ENCODE measurements at regions of chr10 and their contacts with region 1.

Region 1: GRCh38 chr10:91198781-91199180 is 21.7 kb upstream of the PCGF5 start:
- DNase-seq: peak; percentile 36
- ATAC-seq: peak; percentile 93 to 98
- H3K4me3 ChIP-seq: peak overlapping the region in 2 of 4 donors; percentile 16 to 19
- H3K27ac ChIP-seq: peak overlapping the region; percentile 72 to 90 (median 81)
- H3K4me1 ChIP-seq: peaks cover 63 to 72% of the 10 kb centered on the region in 2 donors
- H3K27me3 ChIP-seq: no peaks in the 10 kb centered on the region
- CTCF ChIP-seq: no peak
- POLR2A ChIP-seq: no peak

Region 2: DNA sequence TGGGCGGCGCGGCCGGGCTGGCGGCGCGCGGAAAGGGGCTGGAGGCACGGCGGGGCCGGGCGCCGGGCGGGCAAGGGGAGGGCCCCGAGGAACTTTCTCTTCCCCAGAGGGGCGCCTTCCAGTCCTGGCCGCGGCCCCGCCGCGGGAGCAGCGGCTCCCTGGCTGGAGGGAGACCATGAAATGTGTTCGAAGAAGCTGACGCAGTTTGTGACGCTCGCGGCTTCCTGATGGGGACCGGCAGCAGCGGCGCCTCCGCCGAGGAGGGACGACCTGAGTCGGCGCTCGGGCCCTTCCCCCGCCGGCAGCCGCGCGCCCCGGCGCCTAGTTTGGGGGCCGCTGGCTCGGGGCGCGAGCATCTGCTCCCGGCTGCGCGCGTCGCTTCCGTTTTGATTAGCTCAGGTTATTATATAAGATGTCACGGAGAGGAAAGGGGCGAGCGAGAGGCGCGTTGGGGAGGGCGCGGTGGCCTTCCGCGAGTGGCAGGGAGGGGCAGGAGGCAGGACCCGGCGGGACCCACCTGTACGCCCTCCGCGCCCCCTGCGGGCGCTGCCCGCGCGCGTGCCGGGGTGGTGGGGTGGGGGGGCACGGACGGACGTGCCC is 35.4 kb before region 1 on chr10:
- in situ Hi-C with region 1: no loop called
- intact Hi-C with region 1: no loop called
- DNase-seq: peak; percentile 14 to 46
- ATAC-seq: peak; percentile 39 to 48
- H3K4me3 ChIP-seq: peak overlapping the region; percentile 60 to 87 (median 78)
- H3K27ac ChIP-seq: peak overlapping the region; percentile 85 to 98 (median 96)
- H3K4me1 ChIP-seq: peaks cover 3 to 13% of the 10 kb centered on the region in 2 donors
- H3K27me3 ChIP-seq: no peaks in the 10 kb centered on the region
- CTCF ChIP-seq: peak in 3 of 5 experiments; percentile 6 to 18 (median 14)
- POLR2A ChIP-seq: peak; percentile 46 to 55

Region 3: GRCh38 chr10:91220194-91220953 is 21.6 kb after region 1 on chr10 and contains the start of gene PCGF5:
- in situ Hi-C with region 1: no loop called
- intact Hi-C with region 1: loop called (anchors 2 kb)
- DNase-seq: peak; percentile 80 to 92
- ATAC-seq: peak; percentile 85 to 92
- H3K4me3 ChIP-seq: peak within 1 kb of the TSS; percentile 76 to 88 (median 82)
- H3K27ac ChIP-seq: peak within 1 kb of the TSS; percentile 88 to 95 (median 92)
- H3K4me1 ChIP-seq: peaks cover 36 to 55% of the 10 kb centered on the region in 2 donors
- H3K27me3 ChIP-seq: no peaks in the 10 kb centered on the region
- CTCF ChIP-seq: peak; percentile 42 to 69 (median 57)
- POLR2A ChIP-seq: peak; percentile 56 to 86
- total RNA-seq, gene PCGF5: 46.2 to 63.5 (median 49.1) TPM

Measured in gastrocnemius medialis (tissue), 4 donors.